Activated CD8-positive, alpha-beta T cell treated with anti-CD3 and anti-CD28 coated beads for 36 hours (primary cell): ENCODE measurements at regions of chr6 and their contacts with region 1.

Region 1: DNA sequence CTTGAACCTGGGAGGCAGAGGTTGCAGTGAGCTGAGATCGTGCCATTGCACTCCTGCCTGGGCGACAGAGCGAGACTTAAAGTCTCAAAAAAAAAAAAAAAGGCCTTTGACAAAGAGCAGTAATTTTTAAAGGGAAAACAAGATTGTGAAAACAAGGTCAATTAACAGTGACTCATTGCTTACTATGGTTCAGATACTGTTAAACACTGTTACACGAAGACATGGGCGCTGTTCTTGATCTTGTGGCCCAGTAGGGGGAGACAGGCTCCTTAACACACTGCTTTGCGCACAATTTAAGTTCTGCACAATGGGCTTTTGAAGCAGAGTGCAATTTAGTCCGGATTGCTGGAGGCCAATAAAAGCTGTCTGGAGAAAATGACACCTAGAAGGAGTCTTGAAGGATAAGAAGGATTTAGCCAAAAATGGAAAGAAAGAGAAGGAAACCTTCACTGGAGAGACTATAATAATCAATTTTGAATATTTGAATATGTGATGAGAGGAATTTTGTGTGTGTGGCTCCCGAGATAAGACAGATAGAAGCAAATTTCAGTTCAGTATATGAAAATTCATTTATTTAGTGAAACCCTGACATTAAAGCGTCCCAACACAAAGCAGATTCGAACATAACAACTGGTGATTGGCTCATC is 6.0 kb upstream of the LATS1 start:
- DNase-seq: peak; percentile 58
- ATAC-seq: peak; percentile 97
- H3K4me3 Mint-ChIP-seq: no peak overlapping the region
- H3K27ac Mint-ChIP-seq: no peak overlapping the region
- H3K4me1 Mint-ChIP-seq: peaks cover 9% of the 10 kb centered on the region
- H3K27me3 Mint-ChIP-seq: no peaks in the 10 kb centered on the region
- CTCF ChIP-seq: peak; percentile 85

Region 2: GRCh38 chr6:149746147-149746946 is 22.5 kb after region 1 on chr6 and contains the start of gene NUP43:
- CTCF ChIA-PET with region 1: interaction called, 17 read pairs
- POLR2A ChIA-PET with region 1: interaction called, 45 read pairs
- intact Hi-C with region 1: no loop called
- DNase-seq: peak; percentile 99
- ATAC-seq: peak; percentile 74
- H3K4me3 Mint-ChIP-seq: peak within 1 kb of the TSS; percentile 98
- H3K27ac Mint-ChIP-seq: peak within 1 kb of the TSS; percentile 90
- H3K4me1 Mint-ChIP-seq: peaks cover 27% of the 10 kb centered on the region
- H3K27me3 Mint-ChIP-seq: no peaks in the 10 kb centered on the region
- CTCF ChIP-seq: peak; percentile 84
- total RNA-seq, gene NUP43: 75.7 to 75.8 TPM